Dendritic cell treated with granulocyte-macrophage colony-stimulating factor and Interleukin-4, amounts not matched to agents 40 ng/mL and 50 ng/mL, for 4 days (primary cell): ENCODE measurements at regions of chr2 and their contacts with region 1.

Region 1: GRCh38 chr2:105369747-105370690 is 28.8 kb downstream of the FHL2 start:
- H3K4me3 Mint-ChIP-seq: no peak overlapping the region
- H3K27ac Mint-ChIP-seq: no peak overlapping the region
- H3K4me1 Mint-ChIP-seq: peaks cover 6% of the 10 kb centered on the region
- H3K27me3 Mint-ChIP-seq: peaks cover 10% of the 10 kb centered on the region

Region 2: GRCh38 chr2:105215586-105216192 is 154.3 kb before region 1 on chr2:
- intact Hi-C with region 1: no loop called
- H3K4me3 Mint-ChIP-seq: no peak overlapping the region
- H3K27ac Mint-ChIP-seq: no peak overlapping the region
- H3K4me1 Mint-ChIP-seq: no peaks in the 10 kb centered on the region
- H3K27me3 Mint-ChIP-seq: no peaks in the 10 kb centered on the region

Region 3: DNA sequence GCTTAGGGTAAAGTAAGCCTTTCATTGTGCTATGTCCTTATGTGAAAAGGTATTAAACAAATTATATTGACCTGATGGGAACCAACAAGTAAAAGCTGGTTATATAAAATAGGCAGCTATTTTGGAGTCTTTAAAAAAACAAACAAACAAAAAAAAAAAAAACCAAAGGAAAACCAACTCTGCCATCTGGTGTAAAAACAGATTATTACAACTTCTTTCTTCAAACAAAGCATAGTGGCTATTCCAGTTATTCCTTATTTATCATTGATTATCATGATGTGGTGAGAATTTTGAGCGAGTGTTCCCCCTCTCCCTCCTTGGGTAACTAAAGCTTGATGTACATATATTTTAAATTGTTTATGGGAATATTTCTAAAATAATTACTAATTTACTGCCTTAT is 151.2 kb after region 1 on chr2:
- intact Hi-C with region 1: loop called (anchors 1 kb)
- H3K4me3 Mint-ChIP-seq: no peak overlapping the region
- H3K27ac Mint-ChIP-seq: no peak overlapping the region
- H3K4me1 Mint-ChIP-seq: no peaks in the 10 kb centered on the region
- H3K27me3 Mint-ChIP-seq: no peaks in the 10 kb centered on the region

Region 4: DNA sequence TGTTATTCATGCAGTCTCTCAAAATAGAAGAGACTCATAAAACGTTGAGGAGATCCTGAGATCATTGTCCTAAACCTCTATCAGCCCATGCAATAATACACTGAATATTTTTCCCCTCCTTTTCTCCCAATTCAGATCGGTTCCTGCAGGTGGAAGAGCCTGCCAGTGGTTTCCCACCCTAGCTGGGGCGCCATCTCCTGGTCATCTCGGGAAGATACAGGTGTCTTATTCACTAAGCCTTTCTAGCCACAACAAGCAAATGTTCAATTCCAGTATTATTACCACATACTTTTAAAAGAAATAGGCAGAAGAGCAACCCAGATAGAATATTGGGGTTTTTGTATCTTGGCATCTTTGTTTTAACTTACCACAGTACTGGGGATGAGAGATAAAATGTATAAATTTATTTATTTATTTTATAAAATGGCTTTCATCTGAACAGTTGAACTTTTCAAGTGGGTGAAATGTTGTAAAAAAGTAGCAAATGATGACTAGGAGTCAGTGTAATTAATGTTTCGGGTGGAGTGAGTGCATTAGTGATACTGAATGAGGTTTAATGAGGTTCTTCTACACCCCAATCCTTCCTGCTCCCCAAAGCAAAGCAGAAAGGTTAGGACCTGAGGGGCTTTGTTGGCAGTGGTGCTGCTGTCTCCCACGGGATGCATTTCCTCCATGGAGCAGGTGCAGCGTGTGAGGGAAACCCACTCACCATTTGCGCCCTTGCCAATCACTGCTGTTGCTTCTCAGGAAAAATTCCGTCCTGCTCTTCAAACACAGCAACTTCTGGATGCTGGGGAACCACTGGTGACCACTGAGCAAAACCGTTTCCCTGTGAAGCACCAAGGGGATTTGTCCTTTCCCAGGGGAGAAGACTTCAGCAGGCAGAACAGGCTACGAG is 176.0 kb after region 1 on chr2:
- intact Hi-C with region 1: loop called (anchors 1 kb)
- H3K4me3 Mint-ChIP-seq: no peak overlapping the region
- H3K27ac Mint-ChIP-seq: no peak overlapping the region
- H3K4me1 Mint-ChIP-seq: no peaks in the 10 kb centered on the region
- H3K27me3 Mint-ChIP-seq: peaks cover 2% of the 10 kb centered on the region